ENCODE measurements at regions of chr19 and their contacts with region 1.

Region 1: GRCh38 chr19:16041299-16041990 is 34.9 kb upstream of the TPM4 start:
- DNase-seq: peak; percentile 84 to 88
- H3K4me3 ChIP-seq: peak overlapping the region in 1 of 2 donors; percentile 12
- H3K27ac ChIP-seq: peak overlapping the region; percentile 36 to 59
- H3K4me1 ChIP-seq: no peaks in the 10 kb centered on the region
- H3K27me3 ChIP-seq: no peaks in the 10 kb centered on the region
- CTCF ChIP-seq: peak; percentile 96 to 98 (median 96)
- POLR2A ChIP-seq: no peak

Region 2: GRCh38 chr19:15902254-15902653 is 139.2 kb before region 1 on chr19:
- intact Hi-C with region 1: no loop called
- DNase-seq: no peak
- H3K4me3 ChIP-seq: no peak overlapping the region
- H3K27ac ChIP-seq: no peak overlapping the region
- H3K4me1 ChIP-seq: no peaks in the 10 kb centered on the region
- H3K27me3 ChIP-seq: no peaks in the 10 kb centered on the region
- CTCF ChIP-seq: no peak
- POLR2A ChIP-seq: no peak

Region 3: DNA sequence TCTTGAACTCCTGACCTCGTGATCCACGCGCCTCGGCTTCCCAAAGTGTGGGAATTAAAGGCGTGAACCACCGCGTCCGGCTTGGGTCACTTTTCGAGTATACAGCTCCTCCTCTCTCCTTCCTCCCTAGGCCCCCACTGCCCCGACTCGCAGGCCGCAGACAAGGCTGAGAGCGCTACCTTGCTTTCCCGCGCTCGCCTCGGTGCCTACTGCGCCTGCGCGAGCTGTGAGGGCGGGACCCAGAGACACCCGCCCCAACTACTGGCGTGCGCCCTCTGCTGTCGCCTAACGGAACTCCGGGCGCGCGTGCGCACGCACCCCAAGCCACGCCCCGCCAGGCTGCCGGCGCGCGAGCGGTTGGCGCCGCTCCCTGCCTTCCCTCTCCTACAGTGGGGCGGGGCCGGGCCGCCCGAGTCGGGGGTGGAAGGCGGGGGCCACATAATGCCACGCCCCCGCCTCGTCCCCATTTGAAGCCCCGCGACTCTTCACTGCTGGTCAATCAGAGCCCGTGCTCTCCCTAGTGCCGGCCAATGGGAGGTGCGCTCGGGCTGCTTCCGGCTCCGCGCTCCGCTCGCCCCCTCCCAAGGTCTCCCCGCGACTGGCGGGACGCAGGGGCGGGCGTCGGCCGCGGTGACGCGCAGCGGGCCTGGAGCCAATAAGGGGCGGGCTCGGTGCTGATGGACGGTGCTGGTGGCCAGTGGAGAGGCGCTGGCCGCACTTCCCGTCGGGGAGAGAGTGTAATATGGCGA is 69.9 kb after region 1 on chr19 and contains the start of gene RAB8A:
- intact Hi-C with region 1: loop called (anchors 5 kb)
- DNase-seq: peak; percentile 99 to 100
- H3K4me3 ChIP-seq: peak within 1 kb of the TSS; percentile 76 to 97
- H3K27ac ChIP-seq: peak within 1 kb of the TSS; percentile 91 to 93
- H3K4me1 ChIP-seq: peaks cover 7 to 19% of the 10 kb centered on the region in 2 donors
- H3K27me3 ChIP-seq: no peaks in the 10 kb centered on the region
- CTCF ChIP-seq: peak; percentile 90 to 100 (median 98)
- POLR2A ChIP-seq: peak; percentile 27 to 47
- total RNA-seq, gene RAB8A: 13.3 to 67.4 (median 40.7) TPM

Region 4: DNA sequence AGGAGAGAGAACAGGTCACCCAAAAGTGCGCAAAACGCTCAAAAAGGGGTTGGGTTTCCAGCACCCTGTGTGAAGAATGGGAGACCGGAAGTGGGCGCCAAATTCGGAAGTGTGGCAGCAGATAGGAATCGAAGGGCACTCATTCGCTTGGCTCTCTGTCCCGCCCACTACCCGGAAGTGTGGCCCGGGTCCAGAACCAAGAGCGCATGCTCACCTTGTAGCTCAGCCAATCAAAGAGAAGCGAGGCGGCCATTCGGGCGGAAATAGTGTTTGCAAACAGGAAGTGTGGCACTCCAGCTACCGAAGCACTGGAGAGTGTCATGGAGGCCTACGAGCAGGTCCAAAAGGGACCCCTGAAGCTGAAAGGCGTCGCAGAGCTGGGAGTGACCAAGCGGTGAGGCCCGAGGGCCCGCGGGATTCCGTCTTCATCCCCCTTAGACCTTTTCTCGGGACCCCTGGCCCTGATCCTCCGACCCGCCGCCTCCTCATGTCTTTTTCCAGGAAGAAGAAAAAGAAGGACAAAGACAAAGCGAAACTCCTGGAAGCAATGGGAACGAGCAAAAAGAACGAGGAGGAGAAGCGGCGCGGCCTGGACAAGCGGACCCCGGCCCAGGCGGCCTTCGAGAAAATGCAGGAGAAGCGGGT is 143.8 kb after region 1 on chr19 and contains the start of gene FAM32A:
- intact Hi-C with region 1: loop called (anchors 5 kb)
- DNase-seq: peak; percentile 99 to 100
- H3K4me3 ChIP-seq: peak within 1 kb of the TSS; percentile 50 to 71
- H3K27ac ChIP-seq: peak within 1 kb of the TSS; percentile 49 to 79
- H3K4me1 ChIP-seq: peaks cover 4 to 11% of the 10 kb centered on the region in 2 donors
- H3K27me3 ChIP-seq: no peaks in the 10 kb centered on the region
- CTCF ChIP-seq: peak in 3 of 4 experiments; percentile 29 to 42 (median 37)
- POLR2A ChIP-seq: peak; percentile 56 to 59
- total RNA-seq, gene FAM32A: 17.6 to 106 (median 31.0) TPM

Measured in uterus (tissue), 4 donors.